Breast epithelium (tissue), 4 donors: ENCODE measurements at regions of chr6 and their contacts with region 1.

Region 1: DNA sequence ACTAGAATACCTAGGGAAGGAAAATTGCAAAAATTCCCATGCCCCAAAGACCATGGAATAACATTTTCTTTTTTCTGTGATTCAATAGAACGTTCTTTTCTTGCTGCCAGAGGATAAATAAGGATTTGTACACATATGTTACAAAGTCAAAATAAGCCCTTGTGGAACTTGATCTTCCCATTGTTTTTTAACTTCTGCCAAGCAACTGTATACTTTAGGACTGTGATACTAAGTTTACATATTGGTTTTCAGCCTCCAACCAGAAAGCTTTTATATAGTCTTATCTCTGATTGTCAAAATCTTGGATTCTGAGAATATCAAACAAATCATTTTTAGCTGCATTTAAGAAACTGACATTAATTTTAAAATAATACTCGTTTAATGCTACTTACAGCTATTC is 84.6 kb downstream of the HMGCLL1 start:
- DNase-seq: no peak
- H3K4me3 ChIP-seq: no peak overlapping the region
- H3K27ac ChIP-seq: no peak overlapping the region
- H3K4me1 ChIP-seq: no peaks in the 10 kb centered on the region
- H3K27me3 ChIP-seq: no peaks in the 10 kb centered on the region
- CTCF ChIP-seq: no peak
- POLR2A ChIP-seq: no peak

Region 2: DNA sequence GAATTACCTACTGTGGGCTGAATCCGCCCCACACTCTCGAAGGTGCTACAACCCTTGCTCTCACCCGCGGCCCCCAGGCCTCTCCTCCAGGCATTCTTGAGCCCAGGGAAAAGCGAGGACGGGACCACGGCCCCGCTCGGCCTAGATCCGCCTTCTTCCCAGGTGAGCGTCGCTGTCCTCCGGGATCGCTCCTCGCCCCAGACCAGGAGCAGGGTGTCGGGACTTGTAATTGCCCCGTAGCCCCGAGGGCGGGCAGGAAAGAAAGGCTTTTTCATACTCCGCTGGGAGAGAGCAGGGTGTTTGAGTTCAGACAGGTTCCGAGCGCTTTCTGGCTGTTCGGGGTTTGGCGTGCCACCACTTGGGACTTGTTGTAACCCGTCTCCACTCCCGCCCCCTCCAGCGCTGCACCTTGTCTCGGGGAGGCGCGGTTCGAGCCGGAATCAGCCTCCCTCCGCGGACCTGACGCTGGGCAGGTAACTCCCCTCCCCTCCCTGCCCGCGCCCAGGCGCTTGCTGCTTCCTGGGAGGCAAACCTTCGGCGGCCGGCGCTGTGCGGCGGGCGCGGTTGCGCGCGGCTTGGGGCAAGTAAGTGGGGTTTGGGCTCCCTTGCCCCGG is 648.1 kb before region 1 on chr6 and contains the start of gene FAM83B:
- intact Hi-C with region 1: loop called (anchors 10 kb)
- DNase-seq: peak; percentile 70 to 82
- H3K4me3 ChIP-seq: peak within 1 kb of the TSS; percentile 33 to 75 (median 74)
- H3K27ac ChIP-seq: peak within 1 kb of the TSS; percentile 79 to 90
- H3K4me1 ChIP-seq: no peaks in the 10 kb centered on the region
- H3K27me3 ChIP-seq: no peaks in the 10 kb centered on the region
- CTCF ChIP-seq: no peak
- POLR2A ChIP-seq: no peak
- total RNA-seq, gene FAM83B: 0.16 to 13.6 (median 8.8) TPM

Region 3: DNA sequence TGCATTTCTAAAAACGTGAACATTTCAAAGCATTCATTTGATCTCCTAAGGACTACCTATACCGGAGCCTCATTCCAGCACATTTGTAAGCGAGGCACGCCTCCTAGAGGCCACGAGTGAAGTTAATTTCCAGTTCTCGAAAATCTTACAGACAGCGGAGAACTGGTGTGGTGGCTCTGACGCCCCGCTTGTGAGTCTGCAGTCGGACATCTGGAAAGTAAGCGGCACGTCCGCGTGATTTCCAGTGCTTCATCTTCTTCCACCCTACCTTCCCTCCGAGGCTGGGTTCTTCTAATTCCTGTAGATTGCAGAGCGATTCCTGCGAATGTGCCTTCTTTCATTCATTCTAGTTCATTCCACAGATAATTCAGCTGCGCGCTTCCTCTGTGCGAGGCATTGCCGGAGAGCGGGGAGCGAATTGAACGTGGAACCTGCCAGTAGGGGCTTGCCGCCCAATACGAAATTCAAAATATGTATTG is 1822.2 kb after region 1 on chr6:
- intact Hi-C with region 1: loop called (anchors 10 kb)
- DNase-seq: peak; percentile 62 to 69
- H3K4me3 ChIP-seq: peak overlapping the region; percentile 59 to 74 (median 62)
- H3K27ac ChIP-seq: no peak overlapping the region
- H3K4me1 ChIP-seq: no peaks in the 10 kb centered on the region
- H3K27me3 ChIP-seq: no peaks in the 10 kb centered on the region
- CTCF ChIP-seq: peak; percentile 63 to 84 (median 76)
- POLR2A ChIP-seq: no peak